ENCODE measurements at regions of chr3 and their contacts with region 1.

Region 1: DNA sequence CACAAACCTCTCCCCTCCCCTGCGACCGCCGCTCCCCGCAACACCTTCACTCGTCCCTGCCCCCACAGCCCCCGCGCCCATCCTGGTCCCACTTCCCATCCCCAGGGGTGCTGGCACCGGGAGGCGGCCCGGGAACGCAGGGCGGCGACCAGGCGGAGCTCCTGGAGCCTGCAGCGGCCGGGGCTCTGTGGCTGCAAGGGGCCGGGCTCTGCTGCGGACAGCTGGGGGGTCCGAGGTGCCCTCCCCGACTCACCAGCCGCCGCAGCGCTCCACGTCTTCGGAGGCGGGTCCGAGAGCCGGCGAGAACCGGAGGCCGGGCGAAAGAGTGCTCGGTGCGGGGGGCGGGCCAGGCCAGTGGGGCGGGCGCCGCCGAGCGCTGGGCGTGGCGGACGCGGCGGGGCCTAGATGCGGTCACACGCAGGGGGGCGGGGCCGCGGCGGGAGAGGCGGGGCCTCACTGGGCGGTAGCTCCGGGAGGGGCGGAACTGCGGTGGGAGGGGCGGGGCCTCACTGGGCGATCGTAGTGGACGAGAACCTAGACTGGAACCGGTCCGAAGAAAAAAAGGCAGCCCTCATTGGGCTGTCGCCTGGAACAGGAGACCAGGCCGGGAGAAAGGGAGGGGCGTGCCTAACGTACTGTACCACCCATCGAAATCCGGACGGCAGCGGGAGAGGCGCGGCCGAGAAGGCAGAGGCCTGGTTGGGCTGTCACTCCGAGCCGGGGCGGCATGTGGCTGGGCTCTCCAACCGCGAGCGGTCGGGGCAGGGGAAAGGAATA is at the start of gene ANO10:
- DNase-seq: peak; percentile 99
- ATAC-seq: peak; percentile 95
- H3K4me3 ChIP-seq: peak within 1 kb of the TSS; percentile 81
- H3K27ac ChIP-seq: peak within 1 kb of the TSS; percentile 78
- H3K4me1 ChIP-seq: peaks cover 4% of the 10 kb centered on the region
- H3K27me3 ChIP-seq: no peaks in the 10 kb centered on the region
- CTCF ChIP-seq: no peak
- POLR2A ChIP-seq: no peak
- RAD21 ChIP-seq: no peak; the same call in 1 of the 2 replicates
- total RNA-seq, gene ANO10: 41.6 and 42.5 TPM in 2 replicates

Region 2: GRCh38 chr3:43223670-43224364 is 398.0 kb before region 1 on chr3:
- CTCF ChIA-PET with region 1: no interaction called
- POLR2A ChIA-PET with region 1: no interaction called
- dilution Hi-C with region 1: no loop called
- in situ Hi-C with region 1: no loop called
- intact Hi-C with region 1: loop called (anchors 10 kb)
- DNase-seq: peak; percentile 27
- ATAC-seq: peak; percentile 27; the same call in 1 of the 2 replicates
- H3K4me3 ChIP-seq: no peak overlapping the region
- H3K27ac ChIP-seq: no peak overlapping the region
- H3K4me1 ChIP-seq: no peaks in the 10 kb centered on the region
- H3K27me3 ChIP-seq: peaks cover 6% of the 10 kb centered on the region; the same call in 1 of the 2 replicates
- CTCF ChIP-seq: peak; percentile 64
- POLR2A ChIP-seq: no peak
- RAD21 ChIP-seq: peak; percentile 70

Region 3: GRCh38 chr3:43489930-43490329 is 131.9 kb before region 1 on chr3:
- CTCF ChIA-PET with region 1: no interaction called
- POLR2A ChIA-PET with region 1: no interaction called
- dilution Hi-C with region 1: no loop called
- in situ Hi-C with region 1: no loop called
- intact Hi-C with region 1: no loop called
- DNase-seq: no peak
- ATAC-seq: peak; percentile 29; the same call in 1 of the 2 replicates
- H3K4me3 ChIP-seq: no peak overlapping the region
- H3K27ac ChIP-seq: peak overlapping the region; percentile 56; the same call in 1 of the 2 replicates
- H3K4me1 ChIP-seq: peaks cover 2% of the 10 kb centered on the region; the same call in 1 of the 2 replicates
- H3K27me3 ChIP-seq: no peaks in the 10 kb centered on the region
- CTCF ChIP-seq: no peak
- POLR2A ChIP-seq: no peak
- RAD21 ChIP-seq: no peak

Region 4: GRCh38 chr3:43540624-43541023 is 81.2 kb before region 1 on chr3:
- CTCF ChIA-PET with region 1: no interaction called
- POLR2A ChIA-PET with region 1: no interaction called
- dilution Hi-C with region 1: no loop called
- in situ Hi-C with region 1: no loop called
- intact Hi-C with region 1: no loop called
- DNase-seq: peak; percentile 58
- ATAC-seq: peak; percentile 95
- H3K4me3 ChIP-seq: no peak overlapping the region
- H3K27ac ChIP-seq: peak overlapping the region; percentile 63; the same call in 1 of the 2 replicates
- H3K4me1 ChIP-seq: peaks cover 7% of the 10 kb centered on the region
- H3K27me3 ChIP-seq: no peaks in the 10 kb centered on the region
- CTCF ChIP-seq: no peak
- POLR2A ChIP-seq: no peak
- RAD21 ChIP-seq: no peak

Region 5: DNA sequence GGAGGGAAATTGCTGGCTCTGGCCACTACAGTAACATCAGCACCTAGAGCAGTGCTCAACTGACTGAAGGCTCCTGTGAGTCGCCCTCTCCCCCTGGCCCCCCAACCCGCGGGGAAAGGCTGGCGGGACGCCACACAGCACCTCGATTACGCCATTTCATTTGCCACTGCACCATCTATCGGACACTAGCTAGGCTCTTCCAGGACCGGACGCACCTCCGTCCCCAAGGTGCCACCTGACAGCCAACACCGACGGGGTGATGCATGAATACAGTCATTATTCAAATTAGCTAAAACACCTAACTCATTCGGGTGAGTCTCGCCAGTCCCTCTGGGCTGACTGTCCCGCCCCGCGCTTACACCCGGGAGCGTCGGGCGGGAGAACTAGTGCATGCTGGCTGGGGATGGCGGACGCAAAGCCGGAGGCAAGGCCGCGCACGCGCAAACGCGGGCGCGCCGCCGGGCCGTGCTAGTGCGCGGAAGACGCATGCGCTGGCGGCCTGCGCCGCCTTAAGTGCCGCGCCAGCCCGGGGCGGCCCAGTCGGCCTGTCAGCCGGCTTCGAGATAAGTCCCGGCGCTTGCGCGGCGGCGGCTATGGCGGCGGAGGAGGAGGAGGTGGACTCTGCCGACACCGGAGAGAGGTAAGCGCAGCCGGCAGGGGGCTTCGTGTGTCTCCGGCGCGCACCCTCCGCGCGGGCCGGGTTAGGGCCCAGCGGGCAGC is 68.7 kb after region 1 on chr3 and contains the start of gene ABHD5:
- CTCF ChIA-PET with region 1: no interaction called
- POLR2A ChIA-PET with region 1: no interaction called
- dilution Hi-C with region 1: no loop called
- in situ Hi-C with region 1: loop called (anchors 5 kb)
- intact Hi-C with region 1: loop called (anchors 2 kb)
- DNase-seq: peak; percentile 95
- ATAC-seq: peak; percentile 90
- H3K4me3 ChIP-seq: peak within 1 kb of the TSS; percentile 87
- H3K27ac ChIP-seq: peak within 1 kb of the TSS; percentile 66
- H3K4me1 ChIP-seq: peaks cover 6% of the 10 kb centered on the region
- H3K27me3 ChIP-seq: no peaks in the 10 kb centered on the region
- CTCF ChIP-seq: peak; percentile 41; the same call in 1 of the 2 replicates
- POLR2A ChIP-seq: peak; percentile 99
- RAD21 ChIP-seq: peak; percentile 27
- total RNA-seq, gene ABHD5: 33.2 and 33.6 TPM in 2 replicates

Region 6: GRCh38 chr3:43759297-43759782 is 137.5 kb after region 1 on chr3:
- CTCF ChIA-PET with region 1: no interaction called
- POLR2A ChIA-PET with region 1: no interaction called
- dilution Hi-C with region 1: no loop called
- in situ Hi-C with region 1: no loop called
- intact Hi-C with region 1: loop called (anchors 10 kb)
- DNase-seq: peak; percentile 87
- ATAC-seq: peak; percentile 85
- H3K4me3 ChIP-seq: no peak overlapping the region
- H3K27ac ChIP-seq: peak overlapping the region; percentile 71
- H3K4me1 ChIP-seq: peaks cover 30% of the 10 kb centered on the region
- H3K27me3 ChIP-seq: no peaks in the 10 kb centered on the region
- CTCF ChIP-seq: peak; percentile 43
- POLR2A ChIP-seq: no peak
- RAD21 ChIP-seq: peak; percentile 39

Region 7: DNA sequence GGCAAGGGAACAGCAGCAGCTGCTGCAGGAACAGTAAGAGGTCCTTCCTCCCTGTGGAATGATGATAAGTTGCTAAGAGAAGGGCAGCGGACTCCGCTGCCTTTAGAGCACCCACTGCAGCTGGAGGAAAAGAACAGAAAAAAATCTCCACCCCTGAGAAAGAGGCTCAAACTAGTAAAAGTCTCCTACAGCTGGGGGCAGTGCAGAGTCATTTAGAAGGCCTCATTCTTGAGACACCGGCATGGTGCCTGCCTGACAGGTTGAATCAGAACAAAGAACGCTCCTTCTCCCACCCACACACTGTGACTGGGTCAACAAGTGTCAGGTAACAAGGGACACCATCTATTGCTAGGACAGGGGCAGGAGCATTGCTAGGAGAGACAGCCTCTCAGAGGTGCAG is 257.3 kb after region 1 on chr3:
- CTCF ChIA-PET with region 1: no interaction called
- POLR2A ChIA-PET with region 1: no interaction called
- dilution Hi-C with region 1: no loop called
- in situ Hi-C with region 1: no loop called
- intact Hi-C with region 1: loop called (anchors 10 kb)
- DNase-seq: no peak
- ATAC-seq: no peak
- H3K4me3 ChIP-seq: no peak overlapping the region
- H3K27ac ChIP-seq: no peak overlapping the region
- H3K4me1 ChIP-seq: no peaks in the 10 kb centered on the region
- H3K27me3 ChIP-seq: no peaks in the 10 kb centered on the region
- CTCF ChIP-seq: 0 out of 2 replicates have a peak, but pooled peaks have one; percentile 19
- POLR2A ChIP-seq: no peak
- RAD21 ChIP-seq: no peak

Region 8: GRCh38 chr3:44363591-44363990 is 741.7 kb after region 1 on chr3:
- CTCF ChIA-PET with region 1: no interaction called
- POLR2A ChIA-PET with region 1: no interaction called
- dilution Hi-C with region 1: no loop called
- in situ Hi-C with region 1: no loop called
- intact Hi-C with region 1: no loop called
- DNase-seq: no peak
- ATAC-seq: no peak
- H3K4me3 ChIP-seq: no peak overlapping the region
- H3K27ac ChIP-seq: no peak overlapping the region
- H3K4me1 ChIP-seq: no peaks in the 10 kb centered on the region
- H3K27me3 ChIP-seq: no peaks in the 10 kb centered on the region
- CTCF ChIP-seq: no peak
- POLR2A ChIP-seq: no peak
- RAD21 ChIP-seq: no peak